Breast epithelium (tissue), 4 donors: ENCODE measurements at regions of chr7 and their contacts with region 1.

Region 1: DNA sequence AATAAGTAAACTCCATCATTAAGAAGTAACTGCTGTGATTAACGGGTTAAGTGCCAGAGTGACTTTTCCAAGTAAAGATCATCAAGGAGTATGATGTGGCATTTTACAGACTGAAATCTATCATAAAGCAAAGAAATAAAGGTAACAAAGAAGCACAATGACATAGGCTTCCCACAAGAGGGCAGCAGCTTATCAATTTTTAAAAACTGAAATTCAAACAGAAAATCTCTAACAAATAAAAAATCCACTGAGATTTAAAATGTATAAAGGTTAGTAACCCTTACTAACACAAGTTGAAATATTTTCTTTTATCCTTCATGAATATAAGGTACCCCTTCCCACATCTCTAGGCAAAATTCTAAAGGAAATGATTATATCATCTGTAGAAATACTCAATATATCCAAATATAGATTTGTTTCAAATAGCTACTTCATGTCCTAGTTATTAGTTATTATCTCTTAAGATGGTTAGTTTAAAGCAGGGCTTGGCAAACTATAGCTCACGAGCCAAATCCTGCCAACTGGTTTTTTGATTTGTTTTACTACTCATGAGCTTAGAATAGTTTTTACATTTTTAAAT is 29.2 kb downstream of the FAM3C start:
- DNase-seq: no peak
- H3K4me3 ChIP-seq: no peak overlapping the region
- H3K27ac ChIP-seq: no peak overlapping the region
- H3K4me1 ChIP-seq: no peaks in the 10 kb centered on the region
- H3K27me3 ChIP-seq: no peaks in the 10 kb centered on the region
- CTCF ChIP-seq: peak; percentile 70 to 75 (median 75)
- POLR2A ChIP-seq: no peak

Region 2: GRCh38 chr7:121395961-121396757 is 29.2 kb after region 1 on chr7 and contains the start of gene FAM3C:
- intact Hi-C with region 1: no loop called
- DNase-seq: peak; percentile 81 to 83
- H3K4me3 ChIP-seq: peak within 1 kb of the TSS; percentile 84 to 95 (median 92)
- H3K27ac ChIP-seq: peak within 1 kb of the TSS; percentile 87 to 90
- H3K4me1 ChIP-seq: no peaks in the 10 kb centered on the region
- H3K27me3 ChIP-seq: no peaks in the 10 kb centered on the region
- CTCF ChIP-seq: peak; percentile 44 to 97 (median 91)
- POLR2A ChIP-seq: peak; percentile 48
- total RNA-seq, gene FAM3C: 35.8 to 89.7 (median 50.8) TPM

Region 3: DNA sequence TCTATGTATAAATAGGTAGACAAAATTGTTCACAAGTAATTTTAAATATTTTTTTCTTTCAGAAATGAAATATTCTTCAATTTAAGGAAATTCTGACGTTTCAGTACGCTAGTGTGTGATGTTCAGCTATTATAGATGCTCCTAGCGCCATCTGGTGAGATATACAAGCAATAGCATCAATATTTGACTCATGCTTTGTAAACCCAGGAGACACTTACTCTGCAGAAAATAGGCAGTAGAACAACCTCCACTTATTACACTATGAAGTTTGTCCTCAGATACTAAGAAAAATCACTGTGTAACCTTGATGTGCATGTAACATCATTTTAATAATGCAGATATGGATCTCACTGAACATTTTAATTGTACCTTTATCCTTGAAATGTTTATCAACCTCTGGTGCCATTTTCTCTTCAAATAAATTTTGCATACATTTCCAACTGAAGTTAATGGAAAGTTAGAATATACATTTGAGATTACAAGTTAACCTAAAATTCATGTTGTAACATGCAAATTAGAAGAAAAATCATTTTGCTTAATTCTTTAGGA is 180.7 kb after region 1 on chr7:
- intact Hi-C with region 1: loop called (anchors 5 kb)
- DNase-seq: no peak
- H3K4me3 ChIP-seq: no peak overlapping the region
- H3K27ac ChIP-seq: no peak overlapping the region
- H3K4me1 ChIP-seq: no peaks in the 10 kb centered on the region
- H3K27me3 ChIP-seq: no peaks in the 10 kb centered on the region
- CTCF ChIP-seq: peak; percentile 23 to 81 (median 81)
- POLR2A ChIP-seq: no peak

Region 4: GRCh38 chr7:121576148-121576917 is 209.4 kb after region 1 on chr7:
- intact Hi-C with region 1: no loop called
- DNase-seq: no peak
- H3K4me3 ChIP-seq: no peak overlapping the region
- H3K27ac ChIP-seq: no peak overlapping the region
- H3K4me1 ChIP-seq: no peaks in the 10 kb centered on the region
- H3K27me3 ChIP-seq: no peaks in the 10 kb centered on the region
- CTCF ChIP-seq: no peak
- POLR2A ChIP-seq: no peak